ENCODE measurements at regions of chr11 and their contacts with region 1.

Region 1: DNA sequence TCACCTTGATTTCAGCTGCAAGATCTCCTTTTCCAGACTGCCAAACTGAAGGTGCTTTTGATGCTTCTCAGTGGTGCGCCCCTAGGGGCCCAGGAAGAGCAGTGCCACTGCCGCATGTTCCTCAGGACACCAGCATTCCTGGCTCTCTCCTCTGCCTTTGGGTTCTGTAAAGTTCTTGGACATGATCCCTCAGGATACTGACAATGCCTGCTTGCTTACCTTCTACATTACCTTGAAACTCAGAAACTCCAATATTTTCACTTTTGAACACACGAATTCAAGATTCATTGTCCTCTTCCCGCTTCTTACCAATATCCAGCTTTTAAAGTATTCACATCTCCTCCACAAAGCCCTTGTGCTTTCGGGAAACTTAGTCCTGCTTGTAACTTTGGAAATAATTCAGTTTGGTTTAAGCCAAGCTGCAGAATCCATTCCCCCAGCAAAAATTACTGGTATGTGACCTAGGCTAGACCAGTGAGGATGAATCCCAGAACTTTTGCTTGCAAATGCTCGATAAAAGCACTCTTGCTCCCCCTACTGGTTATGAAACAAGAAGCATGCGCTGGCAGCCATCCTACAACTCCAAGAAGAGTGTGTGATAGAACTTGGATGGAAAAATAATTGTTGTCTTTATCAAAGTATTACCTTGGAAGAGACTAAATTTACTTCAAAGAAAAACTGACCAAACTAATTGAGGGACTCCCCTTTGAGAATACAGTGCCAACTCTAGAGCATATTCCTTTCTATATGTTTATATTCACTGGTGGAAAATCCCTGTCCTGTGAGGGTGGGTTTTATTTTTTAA is 16.5 kb upstream of the OR5B21 start:
- DNase-seq: peak; percentile 57 to 66 (median 63)
- H3K4me3 ChIP-seq: peak overlapping the region in 1 of 2 donors; percentile 22
- H3K4me3 Mint-ChIP-seq: peak overlapping the region; percentile 68 to 85 (median 76)
- H3K27ac ChIP-seq: peak overlapping the region; percentile 55
- H3K27ac Mint-ChIP-seq: peak overlapping the region; percentile 77 to 97 (median 94)
- H3K4me1 ChIP-seq: peaks cover 35% of the 10 kb centered on the region
- H3K4me1 Mint-ChIP-seq: peaks cover 31 to 54% (median 40%) of the 10 kb centered on the region in 4 donors
- H3K27me3 ChIP-seq: no peaks in the 10 kb centered on the region
- H3K27me3 Mint-ChIP-seq: no peaks in the 10 kb centered on the region

Region 2: GRCh38 chr11:58549644-58550043 is 25.2 kb after region 1 on chr11:
- CTCF ChIA-PET with region 1: interaction called, 12 read pairs
- POLR2A ChIA-PET with region 1: no interaction called
- intact Hi-C with region 1: no loop called
- DNase-seq: no peak
- H3K4me3 ChIP-seq: no peak overlapping the region
- H3K4me3 Mint-ChIP-seq: no peak overlapping the region
- H3K27ac ChIP-seq: no peak overlapping the region
- H3K27ac Mint-ChIP-seq: peak overlapping the region in 2 of 7 donors; percentile 38 to 66
- H3K4me1 ChIP-seq: no peaks in the 10 kb centered on the region
- H3K4me1 Mint-ChIP-seq: peaks cover 5 to 35% (median 16%) of the 10 kb centered on the region in 4 donors
- H3K27me3 ChIP-seq: no peaks in the 10 kb centered on the region
- H3K27me3 Mint-ChIP-seq: no peaks in the 10 kb centered on the region

Region 3: DNA sequence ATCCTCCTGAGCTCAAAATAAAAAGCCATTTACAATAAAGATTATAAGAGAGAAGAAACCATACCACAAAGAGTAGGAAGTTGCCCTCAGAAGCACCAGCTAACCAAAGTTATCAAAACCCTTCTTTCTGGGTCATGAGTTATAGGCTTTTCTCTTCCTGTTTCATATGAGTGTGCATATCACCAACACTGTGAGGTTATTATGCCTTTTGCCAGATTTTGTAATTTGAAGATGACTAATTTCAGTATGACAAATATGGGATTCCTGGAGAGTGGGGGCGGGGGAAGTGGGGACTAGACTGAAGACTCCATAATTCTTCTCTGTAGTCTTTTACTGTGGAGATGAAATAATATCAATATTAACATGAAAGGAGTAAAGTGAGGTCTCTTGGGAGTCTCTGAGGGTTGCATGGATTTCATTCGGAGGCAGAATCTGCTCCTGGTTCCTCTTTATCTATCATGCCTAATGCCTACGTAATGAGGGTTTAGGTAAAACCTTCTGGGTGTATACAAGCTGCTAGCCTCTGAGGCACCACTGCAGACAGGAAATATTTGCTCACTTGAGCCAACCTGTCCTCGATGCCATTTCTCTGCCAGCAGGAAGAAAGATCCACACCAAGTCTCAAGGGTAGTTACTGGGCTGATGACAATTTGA is 49.1 kb after region 1 on chr11:
- CTCF ChIA-PET with region 1: interaction called, 19 read pairs
- POLR2A ChIA-PET with region 1: interaction called, 29 read pairs
- intact Hi-C with region 1: loop called (anchors 1 kb)
- DNase-seq: peak; percentile 50 to 84 (median 58)
- H3K4me3 ChIP-seq: peak overlapping the region; percentile 76 to 96
- H3K4me3 Mint-ChIP-seq: peak overlapping the region; percentile 92 to 99 (median 95)
- H3K27ac ChIP-seq: peak overlapping the region; percentile 99
- H3K27ac Mint-ChIP-seq: peak overlapping the region; percentile 99 to 100 (median 100)
- H3K4me1 ChIP-seq: peaks cover 66% of the 10 kb centered on the region
- H3K4me1 Mint-ChIP-seq: peaks cover 33 to 83% (median 57%) of the 10 kb centered on the region in 4 donors
- H3K27me3 ChIP-seq: no peaks in the 10 kb centered on the region
- H3K27me3 Mint-ChIP-seq: peaks cover 0 to 3% of the 10 kb centered on the region in 2 donors

Region 4: DNA sequence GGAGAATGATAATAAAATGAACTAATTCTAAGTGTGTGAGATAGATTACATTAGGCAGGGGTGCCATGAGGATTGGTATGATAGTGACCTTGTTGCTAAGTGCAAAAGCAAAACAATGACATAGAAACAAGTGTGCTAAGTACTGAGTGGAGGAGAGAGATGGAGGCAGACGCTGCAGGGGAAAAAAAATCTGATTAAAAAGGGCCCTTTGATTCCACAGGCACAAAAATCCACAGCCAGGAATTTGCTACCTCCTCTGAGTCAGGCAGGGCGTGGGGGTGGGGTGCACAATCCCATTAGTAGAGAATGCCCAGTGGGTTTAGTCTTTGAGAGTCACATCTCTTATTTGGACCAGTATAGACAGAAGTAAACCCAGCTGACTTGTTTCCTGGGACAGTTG is 97.9 kb after region 1 on chr11 and contains the start of gene CNTF:
- CTCF ChIA-PET with region 1: no interaction called
- POLR2A ChIA-PET with region 1: no interaction called
- intact Hi-C with region 1: no loop called
- DNase-seq: no peak
- H3K4me3 ChIP-seq: no peak within 1 kb of the TSS
- H3K4me3 Mint-ChIP-seq: no peak within 1 kb of the TSS
- H3K27ac ChIP-seq: no peak within 1 kb of the TSS
- H3K27ac Mint-ChIP-seq: peak within 1 kb of the TSS in 4 of 7 donors; percentile 27 to 81 (median 35)
- H3K4me1 ChIP-seq: no peaks in the 10 kb centered on the region
- H3K4me1 Mint-ChIP-seq: peaks cover 0 to 3% (median 0%) of the 10 kb centered on the region in 4 donors
- H3K27me3 ChIP-seq: no peaks in the 10 kb centered on the region
- H3K27me3 Mint-ChIP-seq: no peaks in the 10 kb centered on the region
- total RNA-seq, gene CNTF: 2.6 to 2.9 TPM

Region 5: DNA sequence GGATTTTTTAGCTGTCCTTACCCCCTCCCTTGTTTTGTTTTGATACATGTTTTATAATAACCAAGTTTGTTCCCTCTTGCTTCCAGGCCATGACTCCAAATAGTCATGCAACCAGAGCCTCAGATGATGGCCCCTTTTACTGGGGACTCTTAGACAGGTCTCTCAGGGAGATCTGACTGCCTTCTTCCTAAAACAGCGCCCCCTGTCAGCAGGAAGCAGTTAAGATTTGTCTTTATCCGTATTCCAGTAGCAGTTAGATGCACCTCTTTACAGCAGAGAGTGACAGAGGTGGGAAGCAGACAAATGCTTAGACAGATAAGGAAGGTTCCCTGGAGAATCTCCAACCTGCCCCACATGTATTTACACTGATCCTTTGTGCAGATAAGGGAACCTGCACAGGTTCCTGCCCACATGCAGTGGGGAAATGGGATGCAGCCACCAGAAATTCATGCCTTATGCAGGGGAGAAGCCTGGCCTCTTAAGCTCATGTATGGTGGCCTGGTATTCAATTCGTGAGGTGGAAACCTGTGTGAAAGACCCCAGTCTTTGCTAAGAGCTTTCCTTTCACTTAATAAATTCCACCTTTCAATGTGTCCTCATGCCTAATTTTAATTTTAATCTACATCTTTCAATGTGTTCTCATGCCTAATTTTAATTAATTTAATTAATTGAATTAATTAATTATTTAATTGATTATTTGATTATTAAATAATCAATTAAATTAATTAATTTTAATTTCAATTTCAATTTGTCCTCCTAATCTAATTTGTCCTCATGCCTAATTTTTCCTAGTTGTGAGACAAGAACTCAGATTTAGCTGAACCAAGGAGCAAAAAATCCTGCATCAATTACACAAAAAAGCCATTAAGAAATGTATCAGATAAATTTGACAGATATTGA is 218.8 kb after region 1 on chr11:
- CTCF ChIA-PET with region 1: no interaction called
- POLR2A ChIA-PET with region 1: no interaction called
- intact Hi-C with region 1: no loop called
- DNase-seq: no peak
- H3K4me3 ChIP-seq: no peak overlapping the region
- H3K4me3 Mint-ChIP-seq: no peak overlapping the region
- H3K27ac ChIP-seq: no peak overlapping the region
- H3K27ac Mint-ChIP-seq: no peak overlapping the region
- H3K4me1 ChIP-seq: no peaks in the 10 kb centered on the region
- H3K4me1 Mint-ChIP-seq: no peaks in the 10 kb centered on the region
- H3K27me3 ChIP-seq: no peaks in the 10 kb centered on the region
- H3K27me3 Mint-ChIP-seq: peaks cover 4 to 12% of the 10 kb centered on the region in 2 donors